Heart left ventricle (tissue), 16 donors: ENCODE measurements at regions of chr4 and their contacts with region 1.

Region 1: DNA sequence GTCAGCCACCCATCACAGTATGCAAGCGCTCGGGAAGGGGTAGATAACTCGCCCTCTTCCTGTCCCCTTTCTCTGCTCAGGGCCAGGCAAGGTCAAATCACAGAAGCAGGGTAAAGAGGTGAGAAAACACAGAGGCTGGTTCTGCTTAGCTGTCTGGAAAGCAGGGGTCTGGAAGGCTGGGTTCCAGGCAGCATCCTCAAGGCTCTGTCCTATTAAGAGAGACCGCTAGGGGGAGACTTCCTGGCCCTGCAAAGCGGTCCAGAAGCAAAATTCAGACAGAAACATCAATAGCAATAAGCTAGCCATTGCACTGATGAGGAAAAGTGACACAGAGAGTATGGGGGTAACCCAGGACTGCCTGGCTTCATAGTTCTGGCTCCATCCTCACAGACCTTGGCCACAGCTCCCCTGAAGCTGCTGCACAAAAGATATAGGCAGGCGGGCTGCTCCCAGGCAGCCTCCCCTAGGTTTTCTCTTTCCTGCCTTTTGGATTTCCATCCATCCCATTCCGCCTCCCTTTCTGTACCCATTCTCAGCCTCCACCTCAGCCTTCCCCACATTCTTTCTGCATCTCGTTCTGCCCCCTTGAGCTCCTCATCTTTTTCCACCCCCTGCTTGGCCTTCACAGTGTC is 308.5 kb downstream of the EVC2 start:
- DNase-seq: no peak
- ATAC-seq: peak in 1 of 4 donors; percentile 29
- H3K4me3 ChIP-seq: no peak overlapping the region
- H3K27ac ChIP-seq: no peak overlapping the region
- H3K4me1 ChIP-seq: no peaks in the 10 kb centered on the region
- H3K27me3 ChIP-seq: peaks cover 0 to 3% (median 0%) of the 10 kb centered on the region in 9 donors
- CTCF ChIP-seq: peak in 11 of 12 donors; percentile 26 to 64 (median 52)
- POLR2A ChIP-seq: no peak

Region 2: GRCh38 chr4:4327652-4328121 is 1072.2 kb before region 1 on chr4:
- intact Hi-C with region 1: no loop called
- DNase-seq: peak; percentile 19 to 73 (median 55)
- ATAC-seq: peak in 3 of 4 donors; percentile 67 to 86 (median 79)
- H3K4me3 ChIP-seq: no peak overlapping the region
- H3K27ac ChIP-seq: no peak overlapping the region
- H3K4me1 ChIP-seq: peaks cover 0 to 13% (median 0%) of the 10 kb centered on the region in 12 donors
- H3K27me3 ChIP-seq: no peaks in the 10 kb centered on the region
- CTCF ChIP-seq: peak in 7 of 12 donors; percentile 15 to 44 (median 34)
- POLR2A ChIP-seq: no peak

Region 3: DNA sequence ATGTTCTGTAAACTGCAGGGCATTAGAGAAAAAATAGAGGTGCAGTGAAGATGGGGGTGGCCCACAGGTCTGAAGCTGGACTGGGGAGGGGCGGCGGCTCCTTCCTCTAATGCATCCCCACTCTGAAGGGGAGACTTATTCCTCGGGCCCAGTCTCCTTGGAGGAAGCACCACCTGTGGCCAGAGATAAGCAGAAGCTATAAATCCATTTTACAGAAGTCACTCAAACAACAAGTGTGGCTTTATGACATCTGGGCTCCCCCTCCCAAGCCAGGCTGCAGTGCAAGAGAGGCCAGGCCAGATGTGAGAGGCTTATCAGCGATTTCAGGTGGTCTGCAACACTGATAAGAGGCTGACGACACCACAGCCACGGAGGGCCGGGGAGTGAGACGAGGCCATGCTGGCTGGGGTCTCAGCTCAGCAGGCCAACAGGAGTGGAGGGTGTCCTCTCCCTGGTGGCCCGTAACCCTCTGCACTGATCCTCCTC is 396.5 kb before region 1 on chr4:
- intact Hi-C with region 1: no loop called
- DNase-seq: no peak
- ATAC-seq: no peak
- H3K4me3 ChIP-seq: no peak overlapping the region
- H3K27ac ChIP-seq: no peak overlapping the region
- H3K4me1 ChIP-seq: no peaks in the 10 kb centered on the region
- H3K27me3 ChIP-seq: peaks cover 0 to 50% (median 21%) of the 10 kb centered on the region in 9 donors
- CTCF ChIP-seq: no peak
- POLR2A ChIP-seq: no peak

Region 4: DNA sequence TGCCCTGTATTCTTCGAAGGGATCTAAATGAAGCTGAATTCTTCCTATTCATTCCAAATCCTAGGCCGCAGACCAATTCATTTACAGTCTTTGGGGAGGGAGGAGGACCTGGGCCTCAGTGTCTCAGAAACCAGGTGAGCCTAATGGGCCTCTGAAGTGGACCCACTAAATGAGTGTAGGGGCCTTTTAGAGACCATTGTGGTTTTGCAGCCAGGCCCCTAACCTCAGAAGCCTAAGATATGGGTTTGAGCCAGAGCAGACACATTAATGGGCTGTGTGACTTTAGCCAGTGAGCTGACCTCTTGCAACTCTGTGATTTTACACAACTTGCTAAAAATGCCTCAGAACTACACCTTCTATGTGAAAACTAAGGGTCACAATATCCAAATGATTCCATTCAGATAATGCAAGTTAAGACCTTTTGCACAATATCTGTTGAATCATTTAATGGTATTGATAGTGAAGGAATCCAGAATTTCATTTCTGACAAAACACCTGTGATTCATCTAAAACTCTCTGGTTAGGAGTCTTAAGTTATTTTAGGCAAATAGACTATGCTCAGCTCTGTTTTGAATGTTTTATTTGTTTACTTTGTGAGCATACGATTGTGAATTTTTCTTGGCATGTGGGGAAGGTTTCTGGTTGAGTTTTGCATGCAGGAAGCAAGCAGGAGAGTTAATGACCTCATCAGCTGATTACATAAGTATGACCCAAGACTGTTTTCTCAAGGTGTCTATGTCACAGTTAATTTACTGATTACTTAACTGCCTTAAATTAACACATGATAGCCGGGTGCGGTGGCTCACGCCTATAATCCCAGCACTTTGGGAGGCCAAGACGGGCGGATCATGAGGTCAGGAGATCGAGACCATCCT is 386.1 kb after region 1 on chr4:
- intact Hi-C with region 1: loop called in 1 of 10 experiments (anchors 10 kb)
- DNase-seq: peak in 1 of 5 donors; percentile 6
- ATAC-seq: peak in 2 of 4 donors; percentile 55 to 67
- H3K4me3 ChIP-seq: no peak overlapping the region
- H3K27ac ChIP-seq: peak overlapping the region in 5 of 12 donors; percentile 2 to 71 (median 42)
- H3K4me1 ChIP-seq: peaks cover 0 to 12% (median 0%) of the 10 kb centered on the region in 12 donors
- H3K27me3 ChIP-seq: no peaks in the 10 kb centered on the region
- CTCF ChIP-seq: no peak
- POLR2A ChIP-seq: no peak

Region 5: DNA sequence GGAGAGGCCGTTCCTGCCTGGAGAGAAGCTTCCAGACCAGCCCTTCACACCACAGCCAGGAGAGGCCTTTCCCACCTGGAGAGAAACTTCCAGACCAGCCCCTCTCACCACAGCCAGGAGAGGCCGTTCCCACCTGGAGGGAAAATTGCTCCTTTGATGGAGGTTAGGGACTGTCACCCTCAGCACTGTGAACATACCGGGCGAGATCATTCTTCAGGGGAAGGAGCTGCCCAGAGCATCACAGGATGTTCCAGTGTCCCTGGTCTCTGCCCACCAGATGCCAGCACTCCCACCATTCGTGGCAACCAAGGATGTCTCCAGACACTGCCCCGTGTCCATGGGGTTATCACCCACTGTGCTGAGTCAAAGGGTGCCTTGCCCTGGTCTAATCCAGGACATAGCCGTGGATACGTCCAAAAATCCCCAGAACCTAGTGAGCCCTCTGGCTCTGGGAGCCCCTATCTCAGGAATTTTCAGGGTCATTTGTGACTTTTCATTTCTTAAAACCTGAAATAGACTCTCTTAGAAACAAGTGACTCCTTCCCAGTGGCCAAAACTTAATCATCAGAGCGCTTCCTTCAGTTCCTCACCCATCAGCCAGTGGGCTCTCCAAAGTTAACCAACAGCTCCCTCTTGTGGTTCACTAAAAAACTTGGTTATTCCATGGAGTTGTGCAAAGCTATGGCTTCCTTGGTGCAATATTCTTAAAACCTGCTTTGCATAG is 412.8 kb after region 1 on chr4:
- intact Hi-C with region 1: loop called in 2 of 10 experiments (anchors 10 kb)
- DNase-seq: peak in 1 of 5 donors; percentile 32
- ATAC-seq: peak; percentile 58 to 83 (median 65)
- H3K4me3 ChIP-seq: no peak overlapping the region
- H3K27ac ChIP-seq: no peak overlapping the region
- H3K4me1 ChIP-seq: no peaks in the 10 kb centered on the region
- H3K27me3 ChIP-seq: no peaks in the 10 kb centered on the region
- CTCF ChIP-seq: peak; percentile 56 to 76 (median 71)
- POLR2A ChIP-seq: no peak

Region 6: DNA sequence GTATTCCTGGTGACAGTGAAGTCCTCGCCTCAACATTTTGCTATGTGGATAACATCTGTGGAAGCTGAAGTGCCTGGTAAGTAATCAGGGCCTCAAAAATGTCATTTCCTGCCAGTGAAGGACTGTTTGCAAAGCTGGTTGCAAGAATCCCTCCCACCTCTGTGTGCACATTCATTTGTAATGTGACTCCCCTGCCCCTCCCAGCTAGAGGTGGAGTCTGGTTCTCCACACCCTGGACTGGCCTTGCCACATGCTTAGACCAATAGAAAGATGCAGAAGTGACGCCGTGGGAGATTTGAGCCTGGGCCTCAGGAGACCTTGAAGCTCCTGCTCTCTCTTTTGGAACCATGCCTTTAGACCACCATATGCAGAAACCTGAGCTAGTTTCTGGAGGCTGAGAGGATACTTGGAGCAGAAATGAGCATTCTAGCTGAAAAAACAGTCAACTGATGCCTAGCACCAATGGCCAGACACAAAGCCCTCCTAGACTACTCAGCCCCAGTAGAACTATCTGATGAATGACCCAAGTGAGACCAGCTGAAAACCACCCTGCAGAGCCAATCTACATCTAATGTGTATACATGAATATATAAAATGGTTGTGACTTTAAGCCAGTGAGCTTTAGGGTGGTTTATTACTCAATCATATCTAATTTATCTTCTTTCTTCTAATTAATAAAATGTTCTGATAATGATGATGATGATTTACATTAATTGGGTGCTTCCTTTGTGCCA is 540.7 kb after region 1 on chr4:
- intact Hi-C with region 1: no loop called
- DNase-seq: no peak
- ATAC-seq: no peak
- H3K4me3 ChIP-seq: no peak overlapping the region
- H3K27ac ChIP-seq: no peak overlapping the region
- H3K4me1 ChIP-seq: no peaks in the 10 kb centered on the region
- H3K27me3 ChIP-seq: peaks cover 0 to 30% (median 0%) of the 10 kb centered on the region in 9 donors
- CTCF ChIP-seq: no peak
- POLR2A ChIP-seq: no peak